Naive thymus-derived CD4-positive, alpha-beta T cell (primary cell): ENCODE measurements at regions of chr7 and their contacts with region 1.

Region 1: DNA sequence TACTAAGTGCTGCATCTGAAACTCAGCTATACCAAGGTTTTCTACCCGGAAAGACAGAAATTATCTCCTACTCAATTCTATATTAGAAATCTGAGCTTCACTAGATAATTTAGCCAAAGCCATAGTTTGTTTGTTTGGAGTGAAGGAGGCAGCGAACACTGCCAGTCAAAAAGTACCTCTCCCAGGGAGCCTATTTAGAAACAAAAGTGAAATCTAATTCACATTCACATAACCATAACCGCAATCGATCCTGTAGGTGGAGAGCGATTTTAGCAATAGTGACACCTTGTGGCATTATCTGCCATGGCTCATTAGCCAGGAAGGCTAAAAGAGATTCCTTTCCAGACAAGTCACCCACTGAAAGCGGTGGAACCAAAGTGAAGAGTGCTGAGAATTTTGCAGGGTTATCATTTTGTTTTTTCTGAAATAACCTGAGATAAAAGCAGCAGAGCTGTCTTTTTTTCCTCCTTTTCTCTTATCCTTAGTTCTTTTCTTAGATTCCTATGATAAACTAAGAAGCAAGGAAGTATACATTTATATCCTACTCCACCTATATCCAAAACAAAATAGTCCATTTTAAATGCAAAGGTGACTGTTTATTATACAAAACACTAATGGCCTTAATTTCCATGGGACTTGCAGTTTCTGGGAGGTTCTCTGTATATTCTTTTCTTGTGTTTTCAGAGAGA is 83.7 kb upstream of the BET1 start:
- DNase-seq: peak in 8 of 9 donors; percentile 27 to 62 (median 46)
- ATAC-seq: peak; percentile 88
- H3K4me3 ChIP-seq: peak overlapping the region; percentile 43
- H3K4me3 Mint-ChIP-seq: peak overlapping the region; percentile 58 to 81 (median 74)
- H3K27ac ChIP-seq: no peak overlapping the region
- H3K27ac Mint-ChIP-seq: peak overlapping the region in 3 of 9 donors; percentile 8 to 70 (median 22)
- H3K4me1 ChIP-seq: no peaks in the 10 kb centered on the region
- H3K4me1 Mint-ChIP-seq: peaks cover 4 to 7% (median 5%) of the 10 kb centered on the region in 7 donors
- H3K27me3 ChIP-seq: no peaks in the 10 kb centered on the region
- H3K27me3 Mint-ChIP-seq: peaks cover 18 to 55% (median 38%) of the 10 kb centered on the region in 5 donors

Region 2: DNA sequence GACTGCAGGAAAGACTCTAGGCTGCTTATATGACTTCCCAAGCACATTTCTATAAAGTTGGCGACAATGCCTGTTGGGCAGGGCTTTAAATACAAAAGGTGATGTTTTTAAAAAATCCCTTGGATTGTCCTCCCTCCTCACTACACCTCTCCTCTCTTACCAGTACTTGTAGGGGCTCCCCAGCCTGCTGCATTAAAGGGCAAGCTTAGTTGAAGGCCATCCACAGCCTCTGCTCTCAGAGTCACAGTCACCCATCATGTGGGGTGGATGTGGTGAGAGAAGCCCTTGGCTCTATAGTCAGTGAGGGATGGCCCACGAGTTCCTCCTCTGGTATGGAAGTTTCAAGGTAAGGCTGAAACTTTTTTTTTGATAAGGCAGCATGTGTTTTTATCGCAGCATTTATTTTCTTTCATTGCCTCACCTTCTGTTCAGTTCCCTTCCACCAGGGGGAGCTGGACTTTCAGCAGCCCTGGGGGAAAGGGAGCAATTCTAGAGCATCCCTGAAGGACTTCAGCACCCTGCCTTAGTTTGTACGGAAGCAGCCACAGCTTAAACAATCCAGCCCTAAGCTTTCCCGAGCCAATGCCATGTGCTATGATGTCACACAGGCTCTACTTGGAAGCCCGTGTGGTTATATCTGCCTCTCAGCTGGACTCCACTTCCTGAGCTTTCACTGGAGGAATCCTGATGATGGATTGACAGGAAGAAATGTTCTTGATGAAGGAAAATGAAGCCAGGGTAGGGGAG is 645.2 kb before region 1 on chr7:
- CTCF ChIA-PET with region 1: no interaction called
- POLR2A ChIA-PET with region 1: no interaction called
- intact Hi-C with region 1: loop called in 1 of 2 experiments (anchors 1 kb)
- DNase-seq: peak in 6 of 9 donors; percentile 2 to 34 (median 13)
- ATAC-seq: peak; percentile 34
- H3K4me3 ChIP-seq: no peak overlapping the region
- H3K4me3 Mint-ChIP-seq: no peak overlapping the region
- H3K27ac ChIP-seq: no peak overlapping the region
- H3K27ac Mint-ChIP-seq: no peak overlapping the region
- H3K4me1 ChIP-seq: no peaks in the 10 kb centered on the region
- H3K4me1 Mint-ChIP-seq: no peaks in the 10 kb centered on the region
- H3K27me3 ChIP-seq: no peaks in the 10 kb centered on the region
- H3K27me3 Mint-ChIP-seq: peaks cover 0 to 4% (median 0%) of the 10 kb centered on the region in 5 donors

Region 3: DNA sequence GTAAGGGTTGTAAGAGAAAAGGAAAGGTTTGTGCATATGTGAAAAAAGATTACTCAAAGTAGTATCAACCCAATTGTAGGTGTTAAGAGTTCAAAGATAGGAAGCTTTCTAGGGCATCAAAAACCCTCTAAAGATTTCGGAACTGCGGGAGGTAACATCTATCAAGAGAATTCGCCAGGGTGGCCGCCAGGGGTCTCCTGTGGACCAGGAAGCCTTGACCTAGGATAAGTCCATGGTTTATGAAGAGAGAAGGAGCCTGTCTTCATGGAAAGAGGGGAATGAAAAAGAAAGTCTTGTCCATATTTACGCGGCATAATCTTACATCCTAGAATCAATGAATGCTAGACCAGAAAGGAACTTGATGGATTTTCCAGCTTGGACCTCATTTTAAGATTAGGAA is 372.6 kb before region 1 on chr7:
- CTCF ChIA-PET with region 1: no interaction called
- POLR2A ChIA-PET with region 1: no interaction called
- intact Hi-C with region 1: loop called in 1 of 2 experiments (anchors 2 kb)
- DNase-seq: peak in 1 of 9 donors; percentile 21
- ATAC-seq: no peak
- H3K4me3 ChIP-seq: no peak overlapping the region
- H3K4me3 Mint-ChIP-seq: no peak overlapping the region
- H3K27ac ChIP-seq: no peak overlapping the region
- H3K27ac Mint-ChIP-seq: no peak overlapping the region
- H3K4me1 ChIP-seq: no peaks in the 10 kb centered on the region
- H3K4me1 Mint-ChIP-seq: peaks cover 0 to 1% (median 0%) of the 10 kb centered on the region in 7 donors
- H3K27me3 ChIP-seq: no peaks in the 10 kb centered on the region
- H3K27me3 Mint-ChIP-seq: peaks cover 0 to 19% (median 9%) of the 10 kb centered on the region in 5 donors

Region 4: DNA sequence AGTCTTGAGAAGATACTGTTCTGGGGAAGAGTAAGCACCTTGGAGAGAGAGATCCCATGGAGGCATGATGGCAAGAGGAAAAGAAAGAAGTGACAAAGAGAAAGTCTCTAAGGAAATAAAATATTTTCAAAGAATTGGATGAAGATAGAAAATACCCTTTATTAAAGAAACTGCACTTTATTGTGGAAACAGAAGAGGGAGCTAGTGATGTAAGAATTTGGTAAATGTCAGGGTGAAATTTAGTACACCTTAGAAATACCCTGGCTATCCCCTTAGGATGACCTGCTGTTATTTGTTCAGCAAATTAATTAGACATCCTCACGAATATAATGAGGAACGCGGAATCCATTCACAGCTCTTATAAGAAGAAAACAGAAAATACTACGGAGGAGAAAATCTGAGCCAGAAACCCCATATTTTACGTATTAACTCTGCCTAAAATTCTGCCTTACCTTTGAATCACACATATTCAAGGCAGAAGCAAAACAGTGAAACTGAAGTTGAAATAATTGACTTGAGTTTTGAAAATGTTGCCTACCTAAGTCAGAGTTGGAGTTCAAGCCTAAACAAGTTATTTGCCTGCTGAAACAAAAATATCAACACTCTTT is 288.0 kb before region 1 on chr7:
- CTCF ChIA-PET with region 1: no interaction called
- POLR2A ChIA-PET with region 1: no interaction called
- intact Hi-C with region 1: loop called in 1 of 2 experiments (anchors 5 kb)
- DNase-seq: no peak
- ATAC-seq: no peak
- H3K4me3 ChIP-seq: no peak overlapping the region
- H3K4me3 Mint-ChIP-seq: no peak overlapping the region
- H3K27ac ChIP-seq: no peak overlapping the region
- H3K27ac Mint-ChIP-seq: no peak overlapping the region
- H3K4me1 ChIP-seq: no peaks in the 10 kb centered on the region
- H3K4me1 Mint-ChIP-seq: no peaks in the 10 kb centered on the region
- H3K27me3 ChIP-seq: no peaks in the 10 kb centered on the region
- H3K27me3 Mint-ChIP-seq: no peaks in the 10 kb centered on the region

Region 5: GRCh38 chr7:93902777-93903423 is 184.9 kb before region 1 on chr7:
- CTCF ChIA-PET with region 1: no interaction called
- POLR2A ChIA-PET with region 1: no interaction called
- intact Hi-C with region 1: loop called (anchors 1 kb)
- DNase-seq: no peak
- ATAC-seq: peak; percentile 36
- H3K4me3 ChIP-seq: no peak overlapping the region
- H3K4me3 Mint-ChIP-seq: no peak overlapping the region
- H3K27ac ChIP-seq: no peak overlapping the region
- H3K27ac Mint-ChIP-seq: no peak overlapping the region
- H3K4me1 ChIP-seq: no peaks in the 10 kb centered on the region
- H3K4me1 Mint-ChIP-seq: no peaks in the 10 kb centered on the region
- H3K27me3 ChIP-seq: no peaks in the 10 kb centered on the region
- H3K27me3 Mint-ChIP-seq: peaks cover 7 to 35% (median 13%) of the 10 kb centered on the region in 5 donors

Region 6: DNA sequence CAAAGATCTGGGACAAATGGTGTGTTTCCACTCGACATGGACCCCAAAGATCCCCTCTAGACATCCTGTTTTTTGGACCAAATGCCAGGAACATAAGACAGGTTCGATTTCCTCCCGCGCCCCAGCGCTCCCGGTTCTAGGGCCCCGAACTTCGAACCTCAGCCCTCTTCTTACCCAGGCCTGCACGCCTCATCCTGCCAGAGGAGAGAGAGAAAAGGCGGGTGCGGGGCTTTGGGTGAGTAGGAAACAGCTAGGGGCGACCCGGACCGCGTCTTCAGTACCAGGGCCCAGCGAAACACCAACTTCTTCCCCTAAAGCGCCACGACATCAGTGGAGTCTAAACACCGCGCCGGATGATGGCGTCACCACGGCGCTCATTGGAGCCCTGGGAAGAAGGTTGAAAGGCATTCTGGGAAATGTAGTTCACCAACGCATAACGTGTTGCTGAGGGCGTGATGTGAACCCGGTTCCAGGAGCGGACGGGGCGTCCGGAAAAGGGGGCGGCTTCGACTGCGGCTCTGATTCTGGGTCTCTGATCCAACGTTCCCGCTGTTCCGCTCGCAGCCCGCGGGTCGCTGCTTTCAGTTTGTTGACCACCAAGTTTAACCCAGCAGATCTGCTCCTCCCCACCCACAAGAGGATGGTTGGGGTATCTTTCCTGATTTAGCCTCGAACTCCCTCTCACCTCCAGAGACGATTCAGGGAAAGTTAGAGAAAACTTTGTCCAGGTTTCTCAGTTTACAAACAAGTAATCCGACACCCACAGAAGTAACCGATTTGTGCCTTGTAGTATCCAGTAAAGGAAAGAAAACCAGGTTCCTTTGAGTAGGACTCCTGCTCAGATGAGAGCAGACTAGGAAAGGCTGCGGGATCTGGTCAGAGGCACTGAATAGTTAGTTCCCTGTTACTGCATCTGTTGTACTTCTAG is 83.5 kb before region 1 on chr7 and contains the start of gene BET1:
- CTCF ChIA-PET with region 1: no interaction called
- POLR2A ChIA-PET with region 1: no interaction called
- intact Hi-C with region 1: loop called (anchors 1 to 2 kb)
- DNase-seq: peak; percentile 87 to 96 (median 92)
- ATAC-seq: peak; percentile 98
- H3K4me3 ChIP-seq: peak within 1 kb of the TSS; percentile 75
- H3K4me3 Mint-ChIP-seq: peak within 1 kb of the TSS; percentile 88 to 100 (median 99)
- H3K27ac ChIP-seq: peak within 1 kb of the TSS; percentile 91
- H3K27ac Mint-ChIP-seq: peak within 1 kb of the TSS; percentile 95 to 100 (median 99)
- H3K4me1 ChIP-seq: peaks cover 3 to 17% of the 10 kb centered on the region in 2 donors
- H3K4me1 Mint-ChIP-seq: peaks cover 22 to 56% (median 51%) of the 10 kb centered on the region in 7 donors
- H3K27me3 ChIP-seq: no peaks in the 10 kb centered on the region
- H3K27me3 Mint-ChIP-seq: peaks cover 0 to 28% (median 11%) of the 10 kb centered on the region in 5 donors
- total RNA-seq, gene BET1: 9.9 to 37.6 (median 25.2) TPM

Region 7: GRCh38 chr7:94100723-94101345 is 13.0 kb after region 1 on chr7:
- CTCF ChIA-PET with region 1: no interaction called
- POLR2A ChIA-PET with region 1: no interaction called
- intact Hi-C with region 1: no loop called
- DNase-seq: no peak
- ATAC-seq: no peak
- H3K4me3 ChIP-seq: no peak overlapping the region
- H3K4me3 Mint-ChIP-seq: no peak overlapping the region
- H3K27ac ChIP-seq: no peak overlapping the region
- H3K27ac Mint-ChIP-seq: no peak overlapping the region
- H3K4me1 ChIP-seq: no peaks in the 10 kb centered on the region
- H3K4me1 Mint-ChIP-seq: no peaks in the 10 kb centered on the region
- H3K27me3 ChIP-seq: no peaks in the 10 kb centered on the region
- H3K27me3 Mint-ChIP-seq: peaks cover 0 to 17% (median 12%) of the 10 kb centered on the region in 5 donors